ENCODE measurements at regions of chr10 and their contacts with region 1.

Region 1: DNA sequence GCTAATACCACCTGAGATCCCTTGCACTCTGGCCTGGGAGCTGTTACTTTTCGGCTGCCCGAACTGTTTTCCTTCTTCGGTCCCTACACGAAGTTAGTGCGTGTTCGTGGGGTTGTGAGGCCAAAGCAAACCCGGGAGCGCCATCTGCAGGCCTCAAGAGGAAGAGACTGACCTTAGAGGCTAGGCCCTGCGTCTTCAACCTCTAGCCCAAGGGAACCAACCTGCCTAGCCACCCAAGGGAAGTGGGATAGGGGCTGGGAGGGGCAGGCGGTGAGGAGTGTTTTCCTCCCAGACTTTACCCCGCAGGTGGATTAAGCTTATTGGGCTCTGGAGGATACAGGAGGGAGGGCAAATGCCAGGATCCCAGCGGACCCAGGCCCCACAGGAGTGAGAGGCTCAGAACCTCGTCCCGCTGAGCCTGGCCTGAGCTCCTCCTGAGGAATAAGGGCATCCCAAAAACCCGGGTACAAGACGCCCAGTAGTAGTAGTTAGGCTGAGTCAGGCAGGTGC is 1.7 kb upstream of the PAX2 start:
- DNase-seq: peak; percentile 84 to 88 (median 86)
- H3K4me3 ChIP-seq: no peak overlapping the region
- H3K27ac ChIP-seq: no peak overlapping the region
- H3K4me1 ChIP-seq: peaks cover 0 to 40% (median 17%) of the 10 kb centered on the region in 4 experiments
- H3K27me3 ChIP-seq: peaks cover under 1 to 100% (median 64%) of the 10 kb centered on the region in 5 experiments

Region 2: GRCh38 chr10:100562008-100562711 is 181.5 kb before region 1 on chr10:
- CTCF ChIA-PET with region 1: interaction called, 55 read pairs
- POLR2A ChIA-PET with region 1: interaction called, 3 read pairs
- DNase-seq: peak; percentile 87 to 93 (median 91)
- H3K4me3 ChIP-seq: peak overlapping the region in 3 of 7 experiments; percentile 8 to 50 (median 23)
- H3K27ac ChIP-seq: no peak overlapping the region
- H3K4me1 ChIP-seq: peaks cover 0 to 15% (median 14%) of the 10 kb centered on the region in 4 experiments
- H3K27me3 ChIP-seq: peaks cover 0 to 61% (median 32%) of the 10 kb centered on the region in 5 experiments

Region 3: DNA sequence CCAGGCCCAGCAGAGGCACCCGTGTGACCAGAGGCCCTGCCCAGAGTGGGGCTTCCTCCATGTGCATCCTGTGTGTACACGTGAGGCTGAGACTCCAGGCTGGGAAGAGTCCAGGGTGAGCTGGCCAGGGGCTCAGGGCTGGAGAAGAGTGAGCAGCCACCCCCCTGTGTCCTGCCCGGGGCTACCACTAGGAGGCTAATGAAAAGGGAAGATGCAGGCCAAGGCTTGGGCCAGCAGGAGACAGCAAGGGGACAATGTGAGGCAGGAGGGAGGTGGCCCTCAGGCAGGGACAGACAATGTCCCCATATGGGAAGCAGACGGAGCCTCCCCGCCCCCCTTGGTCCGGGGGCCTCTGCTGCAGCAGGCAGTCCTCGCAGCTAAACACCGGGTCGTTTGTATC is 105.9 kb before region 1 on chr10:
- CTCF ChIA-PET with region 1: interaction called, 12 read pairs
- POLR2A ChIA-PET with region 1: no interaction called
- DNase-seq: peak; percentile 40 to 48 (median 45)
- H3K4me3 ChIP-seq: no peak overlapping the region
- H3K27ac ChIP-seq: no peak overlapping the region
- H3K4me1 ChIP-seq: no peaks in the 10 kb centered on the region
- H3K27me3 ChIP-seq: peaks cover 5 to 79% (median 36%) of the 10 kb centered on the region in 5 experiments

Region 4: DNA sequence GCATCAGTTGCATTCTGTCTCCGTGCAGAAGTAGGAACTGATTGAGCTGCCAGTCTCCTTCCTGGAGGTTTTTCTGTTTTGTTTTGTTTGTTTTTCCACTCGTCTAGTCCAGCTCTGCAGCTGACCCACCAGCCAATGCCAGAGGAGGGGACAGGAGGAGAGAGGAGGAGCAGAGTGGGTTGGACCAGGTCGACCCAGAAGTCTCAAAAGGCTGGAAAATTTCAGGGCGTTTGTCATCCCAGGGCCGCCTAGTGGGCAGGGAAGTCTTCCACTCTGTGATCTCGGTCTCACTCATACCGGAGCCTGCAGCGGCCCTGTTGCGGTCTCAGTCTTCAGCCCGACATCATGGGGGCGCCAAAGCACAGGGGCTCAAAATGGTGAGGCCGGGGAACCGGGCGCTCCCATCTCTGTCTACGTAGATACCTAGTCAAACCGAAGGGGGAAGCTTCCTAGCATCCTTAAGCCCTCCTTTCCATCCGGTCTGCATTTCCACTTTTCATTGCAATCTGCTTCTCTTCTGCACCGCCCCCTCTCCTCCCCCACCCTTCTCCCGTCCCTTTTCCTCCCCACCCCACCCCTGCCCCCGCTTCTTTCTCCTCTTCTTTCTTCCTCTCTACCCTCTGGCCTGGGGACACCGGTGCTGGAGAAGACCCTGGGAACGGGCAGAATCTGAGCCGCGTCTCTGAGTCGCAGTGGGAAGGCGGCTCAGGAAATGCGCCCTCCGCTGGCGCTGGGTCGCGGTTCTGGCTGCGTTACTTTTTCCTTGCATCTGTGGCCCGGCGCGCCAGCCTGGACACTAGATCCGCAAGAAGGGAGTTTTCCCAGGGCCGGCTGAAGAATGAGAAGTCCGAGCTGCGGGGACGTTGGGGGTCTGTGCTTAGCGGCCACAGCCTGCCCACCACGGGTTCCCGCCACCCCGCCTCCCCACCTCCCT is 14.5 kb before region 1 on chr10:
- CTCF ChIA-PET with region 1: interaction called, 33 read pairs
- POLR2A ChIA-PET with region 1: no interaction called
- DNase-seq: peak; percentile 68 to 75 (median 73)
- H3K4me3 ChIP-seq: no peak overlapping the region
- H3K27ac ChIP-seq: no peak overlapping the region
- H3K4me1 ChIP-seq: peaks cover 0 to 30% (median 15%) of the 10 kb centered on the region in 4 experiments
- H3K27me3 ChIP-seq: peaks cover 12 to 99% (median 67%) of the 10 kb centered on the region in 5 experiments

Region 5: GRCh38 chr10:101311185-101312066 is 567.7 kb after region 1 on chr10:
- CTCF ChIA-PET with region 1: no interaction called
- POLR2A ChIA-PET with region 1: no interaction called
- DNase-seq: no peak
- H3K4me3 ChIP-seq: peak overlapping the region in 1 of 7 experiments; percentile 12
- H3K27ac ChIP-seq: no peak overlapping the region
- H3K4me1 ChIP-seq: peaks cover 0 to 8% (median 2%) of the 10 kb centered on the region in 4 experiments
- H3K27me3 ChIP-seq: peaks cover 10 to 72% (median 20%) of the 10 kb centered on the region in 5 experiments

Measured in common myeloid progenitor, CD34-positive (primary cell).